A549 (cell line): ENCODE measurements at regions of chr2 and their contacts with region 1.

Region 1: DNA sequence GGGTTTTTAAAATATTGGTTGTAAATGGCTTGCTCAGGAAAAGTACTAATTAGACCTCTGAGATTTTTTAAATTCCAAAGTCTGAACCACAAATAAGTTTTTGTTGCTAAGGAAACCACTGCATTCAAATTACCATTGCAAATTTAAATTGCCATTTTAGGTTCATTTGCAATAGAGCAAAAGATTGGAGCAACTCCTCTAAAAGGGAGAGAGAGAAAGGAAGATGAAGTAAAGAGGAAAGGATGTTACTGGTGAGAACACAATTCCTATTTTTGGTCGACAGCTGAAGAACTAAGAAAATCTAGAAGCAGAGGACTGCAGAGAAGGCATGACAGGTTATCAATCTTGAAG is 74.9 kb downstream of the FOXI3 start:
- DNase-seq: no peak
- ATAC-seq: no peak
- H3K4me3 ChIP-seq: no peak overlapping the region
- H3K27ac ChIP-seq: no peak overlapping the region
- H3K4me1 ChIP-seq: no peaks in the 10 kb centered on the region
- CTCF ChIP-seq: no peak
- EP300 ChIP-seq: no peak
- POLR2A ChIP-seq: no peak
- RAD21 ChIP-seq: no peak

Region 2: DNA sequence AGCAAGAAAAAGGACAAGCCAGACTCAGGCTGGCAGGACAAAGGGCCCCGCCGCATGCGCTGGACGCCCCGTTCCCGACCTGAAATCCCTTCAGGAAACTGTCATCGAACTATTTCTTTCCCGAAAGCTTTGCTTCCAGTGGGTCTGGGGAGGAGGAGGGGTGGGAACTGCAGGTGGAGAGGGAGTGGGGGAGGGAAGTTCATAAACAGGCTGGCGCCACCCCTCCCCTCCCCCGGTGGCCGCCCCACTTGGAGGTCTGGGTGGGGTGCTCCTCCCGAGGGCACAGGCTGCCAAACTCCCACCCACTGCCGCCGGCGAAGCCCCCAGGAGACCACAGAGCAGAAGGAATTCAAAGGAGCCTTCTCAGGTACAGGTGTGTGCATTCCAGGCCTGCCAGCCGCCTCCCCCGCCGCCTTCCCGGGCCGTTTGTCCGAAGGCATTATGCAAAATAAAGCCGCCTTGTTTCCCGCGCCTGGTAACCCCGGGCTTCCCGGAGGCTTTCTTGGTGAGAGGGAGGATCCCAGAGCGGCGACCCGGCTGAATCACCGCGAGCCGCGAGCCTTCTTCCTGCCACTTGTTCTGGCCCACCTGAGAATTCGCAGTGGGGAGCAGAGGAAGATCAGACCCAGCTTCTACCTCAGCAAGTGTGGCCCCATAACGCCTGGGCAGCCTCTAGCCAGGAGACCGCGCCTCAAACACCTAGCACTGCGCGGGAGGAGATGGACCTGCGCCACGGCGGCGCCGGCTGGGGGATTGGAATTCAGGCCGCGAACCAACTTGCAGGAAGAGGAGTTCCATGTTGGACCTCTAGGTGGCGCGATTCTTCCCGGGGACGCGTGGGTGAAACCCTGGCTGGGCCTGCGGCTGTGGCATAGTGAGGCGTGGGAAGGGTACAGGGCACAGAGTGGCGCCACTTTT is 27.0 kb before region 1 on chr2:
- CTCF ChIA-PET with region 1: interaction called, 14 read pairs
- POLR2A ChIA-PET with region 1: no interaction called
- DNase-seq: peak; percentile 52 to 71
- ATAC-seq: peak; percentile 76 to 91
- H3K4me3 ChIP-seq: peak overlapping the region; percentile 41
- H3K27ac ChIP-seq: peak overlapping the region; percentile 3 to 61; a peak in 4 of 6 replicates
- H3K4me1 ChIP-seq: peaks cover 6% of the 10 kb centered on the region; the same call in 1 of the 3 replicates
- CTCF ChIP-seq: peak; percentile 65
- EP300 ChIP-seq: no peak
- POLR2A ChIP-seq: no peak
- RAD21 ChIP-seq: peak; percentile 41 to 47; a peak in 4 of 5 replicates

Region 3: DNA sequence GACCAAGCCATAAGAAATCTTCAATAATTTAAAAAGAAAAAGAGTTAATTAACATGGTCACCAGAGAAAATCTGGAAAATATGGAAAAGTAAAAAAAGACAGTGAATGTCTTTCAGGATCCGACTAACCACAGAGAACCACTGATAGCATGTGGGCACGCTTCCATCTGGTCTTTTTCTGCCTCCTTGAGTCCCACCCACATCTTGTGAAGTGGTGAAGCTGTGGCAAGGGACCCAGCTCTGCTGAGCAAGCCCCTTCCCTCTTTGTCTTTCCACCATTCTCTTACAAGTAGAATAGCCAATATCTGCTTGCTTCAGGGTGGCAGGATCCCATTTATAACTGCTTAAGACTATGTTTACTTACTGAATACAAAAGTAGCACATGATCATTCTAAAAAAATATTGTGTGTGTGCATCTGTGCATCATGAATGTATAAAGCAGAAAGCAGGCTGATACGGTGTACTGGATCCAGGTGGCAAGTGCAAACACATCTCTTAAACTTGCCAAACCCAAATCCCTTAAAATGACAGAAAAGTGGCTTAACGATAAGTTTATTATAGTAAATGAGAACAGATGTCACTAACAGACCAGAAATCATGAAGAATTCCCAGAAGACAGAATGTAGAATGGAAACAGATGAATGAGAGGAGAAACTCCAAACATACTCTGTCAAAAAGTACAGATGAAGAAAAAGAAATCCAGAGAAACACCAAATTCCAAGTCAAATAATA is 22.6 kb after region 1 on chr2:
- CTCF ChIA-PET with region 1: no interaction called
- POLR2A ChIA-PET with region 1: no interaction called
- DNase-seq: no peak
- ATAC-seq: no peak
- H3K4me3 ChIP-seq: no peak overlapping the region
- H3K27ac ChIP-seq: no peak overlapping the region
- H3K4me1 ChIP-seq: no peaks in the 10 kb centered on the region
- CTCF ChIP-seq: no peak
- EP300 ChIP-seq: no peak
- POLR2A ChIP-seq: no peak
- RAD21 ChIP-seq: no peak